CD4-positive, alpha-beta memory T cell (primary cell): ENCODE measurements at regions of chr6 and their contacts with region 1.

Region 1: DNA sequence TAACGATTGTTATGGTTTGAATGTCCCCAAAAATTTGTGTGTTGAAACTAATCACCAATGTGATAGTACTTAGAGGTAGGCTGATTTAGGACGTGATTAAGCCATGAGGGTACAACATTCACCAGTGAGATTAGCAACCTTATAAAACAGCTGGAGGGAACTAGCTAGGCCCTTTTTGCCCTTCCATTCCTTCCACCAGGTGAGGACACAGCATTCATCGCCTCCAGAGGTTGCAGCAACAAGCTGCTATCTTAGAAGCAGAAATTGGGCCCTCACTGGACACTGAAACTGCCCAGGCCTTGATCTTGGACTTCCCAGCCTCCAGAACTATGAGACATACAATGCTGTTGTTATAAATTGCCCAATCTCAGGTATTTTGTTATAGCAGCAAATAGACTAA is 340.7 kb upstream of the JARID2 start:
- DNase-seq: no peak
- H3K4me3 ChIP-seq: no peak overlapping the region
- H3K4me3 Mint-ChIP-seq: no peak overlapping the region
- H3K27ac ChIP-seq: no peak overlapping the region
- H3K27ac Mint-ChIP-seq: no peak overlapping the region
- H3K4me1 ChIP-seq: peaks cover 3% of the 10 kb centered on the region
- H3K4me1 Mint-ChIP-seq: peaks cover 3 to 6% (median 3%) of the 10 kb centered on the region in 4 donors
- H3K27me3 ChIP-seq: no peaks in the 10 kb centered on the region
- H3K27me3 Mint-ChIP-seq: no peaks in the 10 kb centered on the region

Region 2: DNA sequence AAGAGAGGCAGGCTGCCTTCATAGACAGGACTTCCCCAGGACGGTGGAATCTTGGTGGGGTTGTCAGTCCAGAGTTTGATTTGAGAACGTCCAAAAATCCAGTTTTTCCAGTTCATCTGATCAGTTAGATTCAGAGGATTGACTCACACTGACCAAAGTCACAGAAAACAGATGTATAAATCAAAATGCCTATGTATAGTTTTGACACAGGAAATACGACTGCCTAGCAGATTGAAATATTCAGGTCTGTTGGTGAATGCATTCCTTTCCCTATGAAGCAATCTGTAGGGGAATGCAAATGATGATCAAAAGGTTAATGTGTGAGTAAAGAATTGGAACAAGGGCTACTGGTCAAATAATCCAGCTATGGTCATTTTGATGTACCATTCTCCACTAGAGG is 1388.1 kb before region 1 on chr6:
- CTCF ChIA-PET with region 1: no interaction called
- POLR2A ChIA-PET with region 1: no interaction called
- intact Hi-C with region 1: loop called (anchors 5 kb)
- DNase-seq: no peak
- H3K4me3 ChIP-seq: no peak overlapping the region
- H3K4me3 Mint-ChIP-seq: no peak overlapping the region
- H3K27ac ChIP-seq: no peak overlapping the region
- H3K27ac Mint-ChIP-seq: no peak overlapping the region
- H3K4me1 ChIP-seq: no peaks in the 10 kb centered on the region
- H3K4me1 Mint-ChIP-seq: no peaks in the 10 kb centered on the region
- H3K27me3 ChIP-seq: no peaks in the 10 kb centered on the region
- H3K27me3 Mint-ChIP-seq: peaks cover 6 to 8% of the 10 kb centered on the region in 2 donors

Region 3: DNA sequence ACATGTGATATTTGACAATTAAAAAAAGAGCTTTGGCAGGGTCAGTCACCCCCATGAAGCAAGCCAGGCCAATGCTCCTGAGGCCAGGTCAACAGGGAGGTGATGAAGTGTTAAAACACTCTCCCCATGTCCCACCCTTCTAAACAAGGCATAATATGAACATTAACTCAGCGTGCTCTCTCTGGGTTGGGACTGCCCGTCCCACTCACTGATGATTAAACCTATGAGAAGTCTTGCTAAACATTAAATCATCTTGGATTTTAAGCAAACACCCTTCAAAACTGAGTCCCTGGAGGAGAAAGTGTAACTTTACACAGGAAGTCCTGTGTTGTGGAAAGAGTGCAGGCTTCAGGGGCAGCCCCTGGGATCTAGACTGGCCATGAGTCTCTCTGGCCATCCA is 229.1 kb before region 1 on chr6:
- CTCF ChIA-PET with region 1: no interaction called
- POLR2A ChIA-PET with region 1: no interaction called
- intact Hi-C with region 1: no loop called
- DNase-seq: no peak
- H3K4me3 ChIP-seq: no peak overlapping the region
- H3K4me3 Mint-ChIP-seq: no peak overlapping the region
- H3K27ac ChIP-seq: no peak overlapping the region
- H3K27ac Mint-ChIP-seq: no peak overlapping the region
- H3K4me1 ChIP-seq: no peaks in the 10 kb centered on the region
- H3K4me1 Mint-ChIP-seq: no peaks in the 10 kb centered on the region
- H3K27me3 ChIP-seq: no peaks in the 10 kb centered on the region
- H3K27me3 Mint-ChIP-seq: no peaks in the 10 kb centered on the region